ENCODE measurements at regions of chr22 and their contacts with region 1.

Region 1: GRCh38 chr22:36528795-36529751 is at the start of gene EIF3D:
- DNase-seq: peak; percentile 100
- H3K4me3 ChIP-seq: peak within 1 kb of the TSS; percentile 70
- H3K27ac ChIP-seq: peak within 1 kb of the TSS; percentile 90
- H3K4me1 ChIP-seq: peaks cover 13% of the 10 kb centered on the region
- H3K27me3 ChIP-seq: no peaks in the 10 kb centered on the region
- CTCF ChIP-seq: no peak
- total RNA-seq, gene EIF3D: 237 and 249 TPM in 2 replicates

Region 2: GRCh38 chr22:36668877-36669276 is 139.8 kb after region 1 on chr22:
- CTCF ChIA-PET with region 1: no interaction called
- POLR2A ChIA-PET with region 1: interaction called, 13 read pairs
- intact Hi-C with region 1: no loop called
- DNase-seq: peak; percentile 28
- H3K4me3 ChIP-seq: no peak overlapping the region
- H3K27ac ChIP-seq: no peak overlapping the region
- H3K4me1 ChIP-seq: no peaks in the 10 kb centered on the region
- H3K27me3 ChIP-seq: no peaks in the 10 kb centered on the region
- CTCF ChIP-seq: no peak

Region 3: GRCh38 chr22:36741204-36741793 is 212.2 kb after region 1 on chr22:
- CTCF ChIA-PET with region 1: no interaction called
- POLR2A ChIA-PET with region 1: no interaction called
- intact Hi-C with region 1: no loop called
- DNase-seq: peak; percentile 50
- H3K4me3 ChIP-seq: no peak overlapping the region
- H3K27ac ChIP-seq: no peak overlapping the region
- H3K4me1 ChIP-seq: no peaks in the 10 kb centered on the region
- H3K27me3 ChIP-seq: peaks cover 27% of the 10 kb centered on the region
- CTCF ChIP-seq: no peak

Region 4: GRCh38 chr22:36924131-36924698 is 395.1 kb after region 1 on chr22:
- CTCF ChIA-PET with region 1: no interaction called
- POLR2A ChIA-PET with region 1: interaction called, 22 read pairs
- intact Hi-C with region 1: no loop called
- DNase-seq: no peak
- H3K4me3 ChIP-seq: no peak overlapping the region
- H3K27ac ChIP-seq: no peak overlapping the region
- H3K4me1 ChIP-seq: no peaks in the 10 kb centered on the region
- H3K27me3 ChIP-seq: peaks cover 17% of the 10 kb centered on the region
- CTCF ChIP-seq: no peak